Activated naive CD4-positive, alpha-beta T cell treated with anti-CD3 and anti-CD28 coated beads, Interleukin-2, amount 10 ng/mL, durations not matched to agents 7 days and 5 days (primary cell): ENCODE measurements at regions of chr14 and their contacts with region 1.

Region 1: GRCh38 chr14:91038438-91038837 is 22.0 kb downstream of the RPS6KA5 start:
- DNase-seq: no peak
- H3K4me3 Mint-ChIP-seq: no peak overlapping the region
- H3K27ac Mint-ChIP-seq: no peak overlapping the region
- H3K4me1 Mint-ChIP-seq: peaks cover 61% of the 10 kb centered on the region
- H3K27me3 Mint-ChIP-seq: no peaks in the 10 kb centered on the region

Region 2: DNA sequence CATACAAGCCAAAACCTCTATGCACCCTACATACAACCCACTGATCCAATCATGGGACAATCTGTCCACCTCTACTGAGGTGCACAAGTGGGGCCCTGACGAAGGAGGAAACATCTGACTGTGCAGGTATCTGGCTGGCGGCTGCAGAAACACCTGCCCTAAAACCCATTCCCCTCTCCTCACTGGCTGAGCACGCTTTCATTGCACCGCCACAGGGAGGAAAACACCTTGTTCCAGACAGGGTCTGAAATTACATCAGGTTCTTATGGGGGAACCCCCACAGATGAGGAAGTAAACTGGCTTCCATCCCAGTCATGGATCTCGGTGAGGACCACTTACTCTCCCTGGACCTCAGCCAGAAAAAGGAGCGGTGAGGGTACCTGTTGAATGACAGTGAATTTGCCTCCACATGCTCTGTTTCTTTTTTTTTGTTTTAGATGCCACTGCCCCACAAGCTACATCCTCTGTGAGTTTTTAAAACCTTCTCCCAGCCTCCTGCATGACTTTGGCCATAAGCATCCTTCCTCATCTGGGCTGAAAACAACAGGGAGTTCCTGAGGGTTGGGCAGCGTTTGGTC is 51.6 kb after region 1 on chr14:
- CTCF ChIA-PET with region 1: no interaction called
- DNase-seq: no peak
- H3K4me3 Mint-ChIP-seq: no peak overlapping the region
- H3K27ac Mint-ChIP-seq: no peak overlapping the region
- H3K4me1 Mint-ChIP-seq: peaks cover 26% of the 10 kb centered on the region
- H3K27me3 Mint-ChIP-seq: peaks cover 25% of the 10 kb centered on the region

Region 3: GRCh38 chr14:91170504-91171121 is 132.2 kb after region 1 on chr14:
- CTCF ChIA-PET with region 1: interaction called, 17 read pairs
- DNase-seq: no peak
- H3K4me3 Mint-ChIP-seq: no peak overlapping the region
- H3K27ac Mint-ChIP-seq: no peak overlapping the region
- H3K4me1 Mint-ChIP-seq: peaks cover 3% of the 10 kb centered on the region
- H3K27me3 Mint-ChIP-seq: no peaks in the 10 kb centered on the region